ENCODE measurements at regions of chr15 and their contacts with region 1.

Region 1: GRCh38 chr15:35519541-35520149 is 26.3 kb downstream of the DPH6 start:
- DNase-seq: peak in 1 of 35 experiments; percentile 66
- ATAC-seq: peak in 2 of 4 experiments; percentile 59
- H3K4me3 ChIP-seq: no peak overlapping the region
- H3K4me3 Mint-ChIP-seq: no peak overlapping the region
- H3K27ac ChIP-seq: no peak overlapping the region
- H3K27ac Mint-ChIP-seq: peak overlapping the region in 1 of 2 donors; percentile 55
- H3K4me1 ChIP-seq: no peaks in the 10 kb centered on the region
- H3K4me1 Mint-ChIP-seq: peaks cover 5 to 10% (median 7%) of the 10 kb centered on the region in 3 donors
- H3K27me3 ChIP-seq: no peaks in the 10 kb centered on the region
- H3K27me3 Mint-ChIP-seq: no peaks in the 10 kb centered on the region

Region 2: DNA sequence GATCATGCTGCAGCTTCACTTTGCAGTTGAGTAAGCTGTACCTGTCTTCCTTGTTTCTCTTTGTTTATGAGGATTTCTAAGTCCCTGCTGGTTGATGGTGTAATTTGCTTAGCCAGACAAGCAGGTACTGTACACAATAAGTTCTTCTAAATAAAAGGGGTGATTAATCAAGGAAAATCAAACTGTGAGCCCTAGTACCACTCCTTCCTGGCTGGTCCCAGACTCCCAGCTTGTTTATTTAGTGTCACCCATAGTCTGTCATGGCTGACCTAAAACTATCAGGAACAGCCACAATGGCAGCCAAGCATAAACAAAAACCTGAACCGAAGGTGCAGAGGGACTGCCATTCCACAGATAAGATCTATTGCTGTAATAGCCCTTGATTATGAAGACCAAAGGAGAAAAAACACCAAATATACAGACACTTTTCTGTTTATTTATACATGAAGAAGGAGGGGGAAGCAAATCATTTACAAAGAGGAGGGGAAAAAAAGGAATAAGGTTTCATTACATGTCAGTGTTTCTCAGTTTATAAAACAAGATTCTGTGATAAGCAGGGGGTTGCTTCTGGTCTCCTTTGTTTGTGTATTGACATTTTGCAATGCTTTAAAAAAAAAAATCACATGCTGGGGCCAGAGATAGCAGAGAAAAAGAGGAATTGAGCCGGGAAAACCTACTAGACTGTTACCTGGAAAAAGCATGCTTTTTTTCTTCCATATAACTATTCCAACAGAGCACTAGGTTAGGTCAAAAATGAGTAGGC is 208.7 kb after region 1 on chr15:
- CTCF ChIA-PET with region 1: no interaction called
- POLR2A ChIA-PET with region 1: no interaction called
- DNase-seq: no peak
- ATAC-seq: no peak
- H3K4me3 ChIP-seq: no peak overlapping the region
- H3K4me3 Mint-ChIP-seq: no peak overlapping the region
- H3K27ac ChIP-seq: no peak overlapping the region
- H3K27ac Mint-ChIP-seq: no peak overlapping the region
- H3K4me1 ChIP-seq: no peaks in the 10 kb centered on the region
- H3K4me1 Mint-ChIP-seq: no peaks in the 10 kb centered on the region
- H3K27me3 ChIP-seq: no peaks in the 10 kb centered on the region
- H3K27me3 Mint-ChIP-seq: no peaks in the 10 kb centered on the region

Region 3: DNA sequence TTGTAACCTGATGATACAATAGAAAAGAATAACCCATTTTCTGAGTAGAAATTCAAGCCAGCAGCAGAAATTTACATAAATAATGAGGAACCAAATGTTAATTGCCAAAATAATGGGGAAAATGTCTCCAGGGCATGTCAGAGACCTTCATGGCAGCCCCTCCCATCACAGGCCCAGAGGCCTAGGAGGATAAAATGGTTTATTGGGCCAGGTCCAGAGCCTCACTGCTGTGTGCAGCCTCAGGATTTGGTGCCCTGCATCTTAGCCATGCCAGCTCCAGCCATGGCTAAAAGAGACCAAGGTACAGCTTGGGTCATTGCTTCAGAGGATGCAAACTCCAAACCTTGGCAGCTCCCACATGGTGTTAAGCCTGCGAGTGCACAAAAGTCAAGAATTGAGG is 1932.9 kb after region 1 on chr15:
- CTCF ChIA-PET with region 1: interaction called in 1 of 2 experiments, 13 read pairs
- POLR2A ChIA-PET with region 1: no interaction called
- DNase-seq: no peak
- ATAC-seq: no peak
- H3K4me3 ChIP-seq: no peak overlapping the region
- H3K4me3 Mint-ChIP-seq: no peak overlapping the region
- H3K27ac ChIP-seq: no peak overlapping the region
- H3K27ac Mint-ChIP-seq: no peak overlapping the region
- H3K4me1 ChIP-seq: no peaks in the 10 kb centered on the region
- H3K4me1 Mint-ChIP-seq: no peaks in the 10 kb centered on the region
- H3K27me3 ChIP-seq: no peaks in the 10 kb centered on the region
- H3K27me3 Mint-ChIP-seq: no peaks in the 10 kb centered on the region